ENCODE measurements at regions of chr2 and their contacts with region 1.

Region 1: GRCh38 chr2:57943276-57943675 is 103.3 kb upstream of the VRK2 start:
- DNase-seq: no peak
- CTCF ChIP-seq: no peak

Region 2: DNA sequence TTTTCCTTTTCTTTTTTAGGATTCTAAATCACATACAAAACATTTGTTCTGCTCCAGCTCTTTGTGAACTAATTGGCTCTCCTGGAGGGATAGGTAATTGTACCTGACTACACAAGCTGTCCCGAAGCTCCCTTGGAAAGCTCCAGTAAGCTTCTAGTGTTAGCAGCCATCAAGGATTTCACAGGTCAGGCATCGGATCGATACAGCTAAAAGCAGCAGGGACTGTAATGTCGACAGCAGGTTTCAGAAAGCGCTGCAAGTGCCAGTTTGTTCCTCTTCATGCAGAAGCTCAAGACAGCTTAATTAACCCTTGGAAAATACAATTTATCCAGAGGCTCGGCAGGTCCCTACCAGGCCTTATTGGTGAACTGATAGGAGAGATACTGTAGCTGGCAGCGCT is 16.1 kb after region 1 on chr2:
- CTCF ChIA-PET with region 1: interaction called, 18 read pairs
- POLR2A ChIA-PET with region 1: no interaction called
- DNase-seq: no peak
- CTCF ChIP-seq: no peak

Region 3: DNA sequence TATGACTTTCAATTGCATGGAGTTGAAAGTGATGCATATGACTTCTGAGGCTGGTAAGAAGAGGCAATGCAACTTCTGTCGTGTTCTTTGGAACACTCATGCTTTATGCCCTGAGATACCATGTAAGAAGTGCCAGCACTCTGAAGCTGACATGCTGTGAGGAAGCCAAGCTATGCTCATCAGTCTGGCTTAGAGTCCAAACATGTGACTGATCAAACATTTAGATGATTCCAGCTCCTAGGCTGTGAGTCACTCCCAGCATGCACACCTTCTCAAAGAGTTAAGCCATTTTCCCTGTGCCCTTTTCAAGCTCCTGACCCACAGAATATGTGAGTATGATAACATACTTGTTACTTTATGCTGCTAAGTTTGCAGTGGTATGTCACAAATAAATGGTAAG is 87.5 kb after region 1 on chr2:
- CTCF ChIA-PET with region 1: no interaction called
- POLR2A ChIA-PET with region 1: no interaction called
- DNase-seq: no peak
- CTCF ChIP-seq: no peak

Region 4: DNA sequence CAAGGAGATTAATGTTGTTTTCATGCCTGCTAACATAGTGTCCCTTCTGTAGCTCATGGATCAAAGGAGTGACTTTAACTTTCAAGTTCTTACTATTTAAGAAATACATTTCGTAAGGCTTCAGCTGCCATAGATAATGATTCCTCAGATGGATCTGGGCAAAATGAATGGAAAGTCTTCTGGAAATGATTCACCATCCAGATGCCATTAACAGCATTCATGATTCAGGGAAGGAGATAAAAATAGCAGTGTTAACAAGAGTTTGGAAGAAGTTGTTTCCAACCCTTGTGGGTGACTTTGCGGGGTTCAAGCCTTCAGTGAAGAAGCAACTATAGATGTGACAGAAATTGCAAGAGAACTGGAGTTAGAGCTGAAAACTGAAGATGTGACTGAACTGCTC is 120.4 kb after region 1 on chr2:
- CTCF ChIA-PET with region 1: no interaction called
- POLR2A ChIA-PET with region 1: no interaction called
- DNase-seq: no peak
- CTCF ChIP-seq: no peak

Measured in GM10248 (cell line).